ENCODE measurements at regions of chr11 and their contacts with region 1.

Region 1: GRCh38 chr11:1298695-1299492 is 10.5 kb downstream of the TOLLIP start:
- DNase-seq: peak; percentile 80
- H3K4me3 ChIP-seq: no peak overlapping the region
- H3K27ac ChIP-seq: no peak overlapping the region
- H3K4me1 ChIP-seq: peaks cover 24% of the 10 kb centered on the region
- H3K27me3 ChIP-seq: no peaks in the 10 kb centered on the region
- CTCF ChIP-seq: no peak

Region 2: DNA sequence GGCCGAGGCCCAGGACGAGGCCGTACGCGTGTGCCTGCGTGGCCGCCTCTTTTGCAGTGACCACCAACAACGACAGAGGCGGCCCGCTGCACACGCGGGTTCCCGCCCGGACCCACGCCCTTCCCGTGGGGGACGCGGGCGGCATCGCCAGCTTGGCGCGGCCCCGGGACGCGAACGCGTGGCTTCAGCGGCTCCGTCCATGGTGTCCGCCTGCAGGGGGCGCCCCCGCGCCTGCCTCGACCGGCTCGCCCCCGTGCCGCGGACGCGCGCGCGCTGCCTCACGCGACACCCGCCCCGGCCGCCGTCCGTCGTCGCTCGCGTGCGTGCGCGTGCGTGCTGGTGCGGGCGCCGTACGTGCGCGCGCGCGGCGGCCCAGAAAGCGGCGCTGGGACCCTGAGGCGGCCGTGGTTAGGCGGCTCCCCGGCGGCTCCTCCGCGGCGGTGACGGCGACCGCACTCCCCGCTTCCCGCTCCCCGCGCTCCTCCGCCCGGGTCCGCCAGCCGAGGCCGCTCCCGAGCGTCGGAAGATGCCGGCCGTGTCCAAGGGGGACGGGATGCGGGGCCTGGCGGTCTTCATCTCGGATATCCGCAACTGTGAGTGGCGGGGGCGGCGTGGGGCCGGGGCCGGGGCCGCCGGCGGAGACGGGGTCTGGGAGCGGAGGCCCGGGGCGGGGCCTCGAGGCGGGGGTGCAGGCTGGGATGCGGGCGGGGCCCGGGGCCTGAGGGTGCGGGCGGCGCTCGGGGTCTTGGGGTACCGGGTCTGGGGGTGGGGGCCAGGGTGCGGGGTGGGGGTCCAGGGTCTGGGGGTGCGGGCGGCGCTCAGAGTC is 373.2 kb before region 1 on chr11 and contains the start of gene AP2A2:
- CTCF ChIA-PET with region 1: no interaction called
- dilution Hi-C with region 1: no loop called
- in situ Hi-C with region 1: no loop called
- intact Hi-C with region 1: no loop called
- DNase-seq: peak; percentile 81
- H3K4me3 ChIP-seq: peak within 1 kb of the TSS; percentile 72 to 82 (median 78)
- H3K27ac ChIP-seq: peak within 1 kb of the TSS; percentile 29
- H3K4me1 ChIP-seq: peaks cover 6% of the 10 kb centered on the region
- H3K27me3 ChIP-seq: no peaks in the 10 kb centered on the region
- CTCF ChIP-seq: peak; percentile 39 to 57
- total RNA-seq, gene AP2A2: 66.6 to 66.7 TPM

Region 3: DNA sequence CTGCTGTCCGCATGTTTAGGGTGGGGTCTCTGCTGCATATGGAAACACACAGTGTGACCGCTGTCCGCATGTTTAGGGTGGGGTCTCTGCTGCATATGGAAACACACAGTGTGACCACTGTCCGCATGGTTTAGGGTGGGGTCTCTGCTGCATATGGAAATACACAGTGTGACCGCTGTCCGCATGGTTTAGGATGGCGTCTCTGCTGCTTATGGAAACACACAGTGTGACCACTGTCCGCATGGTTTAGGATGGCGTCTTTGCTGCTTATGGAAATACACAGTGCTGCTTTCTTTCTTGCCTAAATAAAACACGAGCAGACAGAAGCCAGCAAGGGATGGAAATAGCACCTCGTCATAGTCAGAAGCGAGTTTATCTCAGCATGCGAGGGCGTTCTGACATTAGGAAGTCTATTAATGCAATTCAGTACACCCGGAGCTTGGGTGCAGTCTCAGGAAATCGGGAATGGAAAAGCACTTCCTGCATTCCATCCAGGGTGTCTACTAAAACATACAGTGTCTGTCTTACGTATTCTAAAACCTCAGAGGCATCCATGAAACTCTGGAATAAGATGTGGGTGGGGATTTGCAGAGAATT is 43.1 kb after region 1 on chr11:
- CTCF ChIA-PET with region 1: no interaction called
- dilution Hi-C with region 1: no loop called
- in situ Hi-C with region 1: no loop called
- intact Hi-C with region 1: no loop called
- DNase-seq: peak; percentile 9
- H3K4me3 ChIP-seq: no peak overlapping the region
- H3K27ac ChIP-seq: no peak overlapping the region
- H3K4me1 ChIP-seq: no peaks in the 10 kb centered on the region
- H3K27me3 ChIP-seq: peaks cover 7% of the 10 kb centered on the region
- CTCF ChIP-seq: no peak

Region 4: DNA sequence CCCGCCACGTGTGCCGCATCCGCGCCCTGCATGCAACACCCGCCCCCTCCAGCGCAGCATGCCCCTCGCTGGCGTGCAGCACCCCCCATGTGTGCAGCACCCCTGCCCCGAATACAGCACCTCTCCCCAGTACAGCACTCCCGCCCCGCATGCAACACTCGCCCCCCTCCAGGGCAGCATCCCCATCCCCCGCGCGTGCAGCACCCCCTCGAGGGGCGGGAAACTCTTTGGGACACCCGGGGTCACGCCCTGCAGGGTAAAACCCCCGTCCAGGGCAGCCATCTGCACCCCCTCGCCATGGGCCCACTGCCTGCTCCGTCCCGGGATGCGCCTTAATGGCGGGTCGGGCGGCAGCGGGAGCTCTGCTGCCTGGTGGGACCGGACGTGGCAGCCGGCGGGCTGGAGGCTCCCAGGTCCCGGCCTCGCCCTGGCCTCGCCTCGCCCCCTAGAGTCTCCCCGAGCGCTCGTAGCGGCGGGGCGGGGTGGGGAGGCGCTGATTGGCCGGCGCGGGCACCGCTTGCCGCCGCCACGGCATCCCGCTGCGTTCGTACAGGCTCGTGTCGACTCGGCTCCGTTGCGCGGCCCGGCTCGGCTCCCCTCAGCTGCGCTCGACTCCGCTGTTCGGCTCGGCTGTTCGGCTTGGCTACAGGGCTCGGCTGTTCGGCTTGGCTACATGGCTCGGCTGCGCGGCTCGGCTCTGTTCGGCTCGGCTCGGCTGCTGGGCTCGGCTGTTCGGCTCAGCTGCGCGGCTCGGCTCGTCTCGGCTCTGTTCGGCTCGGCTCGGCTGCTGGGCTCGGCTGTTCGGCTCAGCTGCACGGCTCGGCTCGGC is 90.4 kb after region 1 on chr11:
- CTCF ChIA-PET with region 1: no interaction called
- dilution Hi-C with region 1: no loop called
- in situ Hi-C with region 1: no loop called
- intact Hi-C with region 1: loop called (anchors 2 kb)
- DNase-seq: peak; percentile 92
- H3K4me3 ChIP-seq: peak overlapping the region; percentile 41 to 57 (median 55)
- H3K27ac ChIP-seq: no peak overlapping the region
- H3K4me1 ChIP-seq: peaks cover 9% of the 10 kb centered on the region
- H3K27me3 ChIP-seq: peaks cover 16% of the 10 kb centered on the region
- CTCF ChIP-seq: no peak

Region 5: GRCh38 chr11:1442163-1442562 is 143.3 kb after region 1 on chr11:
- CTCF ChIA-PET with region 1: no interaction called
- dilution Hi-C with region 1: no loop called
- in situ Hi-C with region 1: no loop called
- intact Hi-C with region 1: loop called (anchors 10 kb)
- DNase-seq: no peak
- H3K4me3 ChIP-seq: no peak overlapping the region
- H3K27ac ChIP-seq: no peak overlapping the region
- H3K4me1 ChIP-seq: peaks cover 3% of the 10 kb centered on the region
- H3K27me3 ChIP-seq: no peaks in the 10 kb centered on the region
- CTCF ChIP-seq: no peak

Region 6: GRCh38 chr11:1514336-1515061 is 215.6 kb after region 1 on chr11:
- CTCF ChIA-PET with region 1: no interaction called
- dilution Hi-C with region 1: no loop called
- in situ Hi-C with region 1: no loop called
- intact Hi-C with region 1: no loop called
- DNase-seq: no peak
- H3K4me3 ChIP-seq: no peak overlapping the region
- H3K27ac ChIP-seq: no peak overlapping the region
- H3K4me1 ChIP-seq: peaks cover 4% of the 10 kb centered on the region
- H3K27me3 ChIP-seq: no peaks in the 10 kb centered on the region
- CTCF ChIP-seq: no peak

Measured in mammary epithelial cell (primary cell).